ENCODE measurements at regions of chr5 and their contacts with region 1.

Region 1: GRCh38 chr5:148730943-148731861 is 76.9 kb upstream of the HTR4 start:
- DNase-seq: peak; percentile 80
- ATAC-seq: peak; percentile 89 to 91

Region 2: GRCh38 chr5:147949711-147950573 is 781.3 kb before region 1 on chr5:
- intact Hi-C with region 1: loop called in 1 of 2 experiments (anchors 5 kb)
- DNase-seq: no peak
- ATAC-seq: peak in 1 of 2 donors; percentile 41

Region 3: GRCh38 chr5:148084269-148084668 is 646.9 kb before region 1 on chr5:
- intact Hi-C with region 1: no loop called
- DNase-seq: no peak
- ATAC-seq: no peak

Region 4: GRCh38 chr5:148290271-148291195 is 440.7 kb before region 1 on chr5:
- intact Hi-C with region 1: loop called in 1 of 2 experiments (anchors 2 kb)
- DNase-seq: no peak
- ATAC-seq: peak in 1 of 2 donors; percentile 47

Region 5: GRCh38 chr5:148443998-148444397 is 287.2 kb before region 1 on chr5:
- intact Hi-C with region 1: loop called (anchors 2 to 5 kb)
- DNase-seq: peak; percentile 30
- ATAC-seq: peak; percentile 81 to 90

Region 6: DNA sequence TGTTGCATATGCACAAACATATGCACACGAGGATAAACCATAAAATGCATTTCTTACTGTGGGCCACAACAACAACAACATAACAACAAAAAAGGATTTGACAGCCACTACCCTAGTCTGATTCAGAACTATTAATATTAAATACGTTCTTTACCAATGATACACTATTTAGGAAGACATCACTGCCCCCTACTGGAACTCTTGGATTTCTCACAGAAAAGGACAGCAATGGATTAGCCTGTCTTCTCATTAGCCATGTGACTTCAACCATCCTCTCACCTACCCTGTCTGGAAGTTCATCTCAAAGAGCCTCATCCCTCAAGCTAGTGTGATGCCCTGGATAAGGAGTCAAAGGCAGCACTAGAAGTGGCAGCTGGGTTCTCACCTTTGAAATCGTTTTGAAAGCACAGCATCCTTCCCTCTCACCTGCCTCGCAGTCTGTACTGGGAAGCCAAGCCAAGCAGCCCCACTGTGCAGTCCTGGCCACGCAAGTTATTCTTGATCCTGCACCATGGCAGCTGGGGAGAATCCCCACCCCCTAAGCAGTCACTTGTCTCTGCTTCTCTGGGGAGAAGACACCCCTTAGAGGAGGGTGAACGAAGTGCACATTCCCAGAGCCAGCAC is 267.1 kb after region 1 on chr5:
- intact Hi-C with region 1: loop called (anchors 10 kb)
- DNase-seq: no peak
- ATAC-seq: peak in 1 of 2 donors; percentile 39

Region 7: GRCh38 chr5:149114403-149115312 is 383.5 kb after region 1 on chr5:
- intact Hi-C with region 1: loop called (anchors 5 kb)
- DNase-seq: peak; percentile 69
- ATAC-seq: peak; percentile 96 to 98